ENCODE measurements at regions of chr17 and their contacts with region 1.

Region 1: GRCh38 chr17:40818733-40819527 is 3.5 kb downstream of the KRT10 start:
- DNase-seq: peak; percentile 67 to 96 (median 80)
- ATAC-seq: peak; percentile 89 to 95 (median 90)
- H3K4me3 ChIP-seq: peak overlapping the region; percentile 71 to 76
- H3K4me3 Mint-ChIP-seq: peak overlapping the region; percentile 92 to 94 (median 94)
- H3K27ac ChIP-seq: peak overlapping the region; percentile 83
- H3K27ac Mint-ChIP-seq: peak overlapping the region; percentile 95 to 96
- H3K4me1 ChIP-seq: peaks cover 6 to 10% of the 10 kb centered on the region in 2 experiments
- H3K4me1 Mint-ChIP-seq: peaks cover 20 to 31% (median 27%) of the 10 kb centered on the region in 3 donors
- H3K27me3 ChIP-seq: peaks cover 0 to 4% of the 10 kb centered on the region in 2 experiments
- H3K27me3 Mint-ChIP-seq: peaks cover 9 to 15% of the 10 kb centered on the region in 2 donors

Region 2: DNA sequence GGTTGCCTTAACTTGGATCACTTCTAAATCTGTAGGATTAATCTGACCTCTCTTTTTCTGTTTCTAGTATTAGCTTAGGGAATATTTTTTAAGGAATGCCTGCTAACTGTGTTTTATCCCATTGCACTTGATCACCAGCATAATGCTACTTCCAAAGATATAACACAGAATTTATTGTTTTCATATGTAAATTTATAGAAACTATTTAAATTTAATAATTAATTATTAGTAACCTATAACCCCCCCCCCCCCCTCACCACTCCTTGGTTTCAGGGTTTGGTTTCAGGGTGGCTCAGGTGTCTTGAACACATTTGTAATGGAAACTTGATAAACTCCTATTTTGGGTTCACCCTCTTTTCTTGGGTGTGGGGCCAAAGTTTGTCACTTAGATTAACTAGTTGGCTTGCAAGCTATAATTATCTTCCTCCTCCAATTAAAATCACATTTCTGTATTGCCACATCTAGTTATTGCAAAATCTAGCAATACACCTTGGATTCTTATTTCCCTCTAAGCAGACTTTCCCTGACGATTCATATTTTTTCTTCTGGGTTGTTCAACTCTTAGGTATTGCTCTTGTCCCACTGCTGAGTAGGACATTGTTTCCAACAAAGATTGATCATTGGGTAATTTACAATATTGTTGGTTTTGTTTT is 29.8 kb after region 1 on chr17:
- CTCF ChIA-PET with region 1: no interaction called
- POLR2A ChIA-PET with region 1: no interaction called
- DNase-seq: no peak
- ATAC-seq: no peak
- H3K4me3 ChIP-seq: no peak overlapping the region
- H3K4me3 Mint-ChIP-seq: no peak overlapping the region
- H3K27ac ChIP-seq: no peak overlapping the region
- H3K27ac Mint-ChIP-seq: no peak overlapping the region
- H3K4me1 ChIP-seq: no peaks in the 10 kb centered on the region
- H3K4me1 Mint-ChIP-seq: no peaks in the 10 kb centered on the region
- H3K27me3 ChIP-seq: peaks cover 3 to 10% of the 10 kb centered on the region in 2 experiments
- H3K27me3 Mint-ChIP-seq: peaks cover 42 to 53% of the 10 kb centered on the region in 2 donors

Region 3: DNA sequence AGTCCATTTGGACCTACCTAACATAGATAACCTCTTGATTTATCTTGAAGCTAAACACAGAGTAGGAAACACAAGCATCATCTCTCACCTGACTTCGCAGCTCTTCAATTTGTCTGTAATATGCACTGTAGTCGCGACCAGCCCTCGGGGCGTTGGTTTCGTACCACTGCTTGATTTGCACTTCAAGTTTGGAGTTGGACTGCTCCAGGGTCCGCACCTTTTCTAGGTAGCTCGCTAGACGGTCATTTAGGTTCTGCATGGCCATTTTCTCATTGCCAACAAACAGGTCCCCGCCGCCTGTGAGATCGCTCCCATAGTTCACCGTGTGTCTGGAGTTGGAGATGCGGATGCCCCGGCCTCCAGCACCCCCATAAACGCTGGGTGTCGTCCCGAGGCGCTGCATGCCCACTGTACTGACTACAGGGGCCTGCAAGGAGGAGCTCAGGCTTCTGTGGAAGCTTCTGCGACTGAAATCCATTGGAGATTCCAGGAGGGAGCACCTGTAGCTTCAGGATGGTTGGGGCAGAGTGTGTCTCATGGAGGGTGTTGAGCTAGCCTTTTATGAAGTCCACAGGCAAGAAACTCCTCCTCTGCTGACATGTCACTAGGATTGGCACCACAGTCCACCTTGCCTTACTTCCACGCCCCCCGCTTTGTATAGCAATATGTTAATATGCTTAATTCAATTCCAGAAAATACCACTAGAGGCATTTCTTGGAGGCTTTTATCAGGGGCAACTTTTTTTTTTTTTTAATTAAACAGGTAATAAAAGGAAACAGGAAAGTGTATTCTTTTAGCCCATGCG is 66.0 kb after region 1 on chr17 and contains the start of gene KRT20:
- CTCF ChIA-PET with region 1: interaction called in 1 of 2 experiments, 14 read pairs
- POLR2A ChIA-PET with region 1: no interaction called
- DNase-seq: no peak
- ATAC-seq: no peak
- H3K4me3 ChIP-seq: no peak within 1 kb of the TSS
- H3K4me3 Mint-ChIP-seq: no peak within 1 kb of the TSS
- H3K27ac ChIP-seq: no peak within 1 kb of the TSS
- H3K27ac Mint-ChIP-seq: no peak within 1 kb of the TSS
- H3K4me1 ChIP-seq: no peaks in the 10 kb centered on the region
- H3K4me1 Mint-ChIP-seq: no peaks in the 10 kb centered on the region
- H3K27me3 ChIP-seq: peaks cover 0 to 11% of the 10 kb centered on the region in 2 experiments
- H3K27me3 Mint-ChIP-seq: peaks cover 27 to 39% of the 10 kb centered on the region in 2 donors
- total RNA-seq, gene KRT20: 0.47 TPM in 1 of 5 donors, not detected in the others

Region 4: GRCh38 chr17:41688699-41689496 is 870.0 kb after region 1 on chr17 and contains the start of gene EIF1:
- CTCF ChIA-PET with region 1: interaction called in 1 of 2 experiments, 9 read pairs
- POLR2A ChIA-PET with region 1: interaction called, 4 to 11 read pairs
- DNase-seq: peak; percentile 98 to 100 (median 99)
- ATAC-seq: peak; percentile 79 to 87 (median 82)
- H3K4me3 ChIP-seq: peak within 1 kb of the TSS; percentile 74 to 90
- H3K4me3 Mint-ChIP-seq: peak within 1 kb of the TSS; percentile 94 to 97 (median 95)
- H3K27ac ChIP-seq: peak within 1 kb of the TSS; percentile 98
- H3K27ac Mint-ChIP-seq: peak within 1 kb of the TSS; percentile 95 to 99
- H3K4me1 ChIP-seq: peaks cover 19 to 29% of the 10 kb centered on the region in 2 experiments
- H3K4me1 Mint-ChIP-seq: peaks cover 37 to 44% (median 41%) of the 10 kb centered on the region in 3 donors
- H3K27me3 ChIP-seq: no peaks in the 10 kb centered on the region
- H3K27me3 Mint-ChIP-seq: no peaks in the 10 kb centered on the region
- total RNA-seq, gene EIF1: 962 to 2,431 (median 988) TPM